B cell (primary cell): ENCODE measurements at regions of chr11 and their contacts with region 1.

Region 1: DNA sequence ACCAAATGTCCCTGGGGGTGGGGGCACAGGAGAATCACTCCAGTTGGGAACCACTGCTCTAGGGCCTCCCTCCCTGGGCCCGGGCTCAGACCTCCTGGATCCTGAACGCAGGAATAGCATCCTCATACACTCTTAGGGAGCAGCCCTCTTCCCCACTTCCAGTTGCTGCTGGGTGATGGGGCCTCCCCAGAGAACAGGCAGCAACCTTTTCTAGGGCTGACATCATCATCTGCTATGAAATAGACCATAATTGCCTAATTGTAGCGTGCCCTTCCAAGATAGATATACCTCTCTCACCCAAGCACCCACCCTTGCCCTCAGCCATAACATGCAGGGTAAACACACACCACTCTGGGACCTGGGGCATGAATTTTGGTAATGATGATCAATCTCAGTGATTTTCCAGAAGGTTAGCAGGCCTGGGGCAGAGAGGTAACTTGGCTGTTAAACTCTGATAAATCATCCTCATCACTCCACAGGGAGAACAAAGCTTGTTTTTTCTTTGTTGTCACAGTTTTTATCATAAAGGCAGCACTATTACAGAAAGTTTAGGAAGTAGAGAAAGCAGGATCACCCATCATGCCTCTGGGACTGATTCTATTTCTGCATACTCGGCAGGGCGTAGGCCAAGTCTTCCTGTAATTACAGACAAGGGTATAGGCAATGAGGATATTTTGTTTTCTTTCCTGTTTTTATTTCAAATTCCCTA is 88.3 kb upstream of the PRDM11 start:
- DNase-seq: no peak
- ATAC-seq: no peak
- H3K4me3 ChIP-seq: no peak overlapping the region
- H3K4me3 Mint-ChIP-seq: no peak overlapping the region
- H3K27ac ChIP-seq: no peak overlapping the region
- H3K27ac Mint-ChIP-seq: no peak overlapping the region
- H3K4me1 ChIP-seq: peaks cover 8 to 9% of the 10 kb centered on the region in 2 donors
- H3K4me1 Mint-ChIP-seq: peaks cover 15% of the 10 kb centered on the region
- H3K27me3 ChIP-seq: peaks cover 0 to 5% (median 0%) of the 10 kb centered on the region in 4 experiments
- H3K27me3 Mint-ChIP-seq: peaks cover 13% of the 10 kb centered on the region
- CTCF ChIP-seq: no peak

Region 2: GRCh38 chr11:44519989-44520737 is 537.9 kb before region 1 on chr11:
- CTCF ChIA-PET with region 1: no interaction called
- POLR2A ChIA-PET with region 1: no interaction called
- intact Hi-C with region 1: no loop called
- DNase-seq: no peak
- ATAC-seq: no peak
- H3K4me3 ChIP-seq: no peak overlapping the region
- H3K4me3 Mint-ChIP-seq: no peak overlapping the region
- H3K27ac ChIP-seq: no peak overlapping the region
- H3K27ac Mint-ChIP-seq: no peak overlapping the region
- H3K4me1 ChIP-seq: no peaks in the 10 kb centered on the region
- H3K4me1 Mint-ChIP-seq: peaks cover 3% of the 10 kb centered on the region
- H3K27me3 ChIP-seq: peaks cover 0 to 7% (median 3%) of the 10 kb centered on the region in 4 experiments
- H3K27me3 Mint-ChIP-seq: peaks cover 37% of the 10 kb centered on the region
- CTCF ChIP-seq: no peak

Region 3: GRCh38 chr11:44737245-44738085 is 320.6 kb before region 1 on chr11:
- CTCF ChIA-PET with region 1: no interaction called
- POLR2A ChIA-PET with region 1: no interaction called
- intact Hi-C with region 1: loop called (anchors 5 kb)
- DNase-seq: no peak
- ATAC-seq: no peak
- H3K4me3 ChIP-seq: no peak overlapping the region
- H3K4me3 Mint-ChIP-seq: no peak overlapping the region
- H3K27ac ChIP-seq: no peak overlapping the region
- H3K27ac Mint-ChIP-seq: no peak overlapping the region
- H3K4me1 ChIP-seq: no peaks in the 10 kb centered on the region
- H3K4me1 Mint-ChIP-seq: no peaks in the 10 kb centered on the region
- H3K27me3 ChIP-seq: peaks cover 0 to 6% (median 0%) of the 10 kb centered on the region in 4 experiments
- H3K27me3 Mint-ChIP-seq: peaks cover 15% of the 10 kb centered on the region
- CTCF ChIP-seq: no peak

Region 4: GRCh38 chr11:45371251-45372115 is 313.4 kb after region 1 on chr11:
- CTCF ChIA-PET with region 1: no interaction called
- POLR2A ChIA-PET with region 1: no interaction called
- intact Hi-C with region 1: no loop called
- DNase-seq: peak; percentile 71
- ATAC-seq: peak; percentile 49
- H3K4me3 ChIP-seq: peak overlapping the region in 1 of 5 experiments; percentile 5
- H3K4me3 Mint-ChIP-seq: peak overlapping the region; percentile 38
- H3K27ac ChIP-seq: no peak overlapping the region
- H3K27ac Mint-ChIP-seq: no peak overlapping the region
- H3K4me1 ChIP-seq: peaks cover 20 to 24% of the 10 kb centered on the region in 2 donors
- H3K4me1 Mint-ChIP-seq: peaks cover 23% of the 10 kb centered on the region
- H3K27me3 ChIP-seq: peaks cover 0 to 49% (median 15%) of the 10 kb centered on the region in 4 experiments
- H3K27me3 Mint-ChIP-seq: peaks cover 68% of the 10 kb centered on the region
- CTCF ChIP-seq: peak; percentile 79